Endothelial cell of umbilical vein (primary cell): ENCODE measurements at regions of chr13 and their contacts with region 1.

Region 1: DNA sequence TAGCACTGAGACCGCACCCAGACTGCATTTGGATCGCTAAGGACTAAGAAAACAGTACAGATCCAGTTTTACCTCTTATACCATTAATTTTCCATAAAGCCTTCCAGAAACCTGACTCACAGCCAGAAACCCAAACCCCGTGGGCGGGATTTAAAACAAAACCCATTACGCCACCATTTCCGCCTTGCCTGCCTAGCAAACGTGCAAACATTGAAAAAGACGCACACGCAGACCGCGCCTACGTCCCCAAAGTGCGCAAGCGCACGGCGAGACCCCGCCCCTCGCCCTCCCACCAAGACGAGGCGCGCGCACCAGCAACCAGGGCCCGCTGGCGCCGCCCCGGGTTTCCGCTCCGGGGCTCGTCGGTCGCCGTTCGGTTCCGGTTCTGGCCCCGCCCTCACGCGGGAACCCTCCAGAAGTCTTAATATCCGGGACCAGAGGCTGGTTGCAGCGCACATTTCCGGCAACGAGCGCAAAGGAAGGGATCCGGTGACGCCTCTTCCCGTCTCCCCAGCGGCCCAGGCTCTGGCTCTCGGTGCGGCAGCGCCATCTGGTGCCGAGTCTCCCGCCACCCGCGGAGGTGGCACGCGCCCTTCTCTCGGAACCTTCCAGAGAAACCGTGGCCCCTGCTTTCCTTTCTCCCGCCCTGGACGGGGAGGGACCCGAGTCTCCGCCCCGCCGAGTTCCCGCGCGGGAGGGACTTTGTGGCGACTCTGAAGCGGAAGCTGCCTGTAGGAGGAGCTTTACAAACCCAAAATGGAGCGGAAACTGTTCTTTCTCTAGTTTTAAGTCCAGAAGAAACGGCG is 256.9 kb upstream of the STARD13 start:
- DNase-seq: peak; percentile 100
- H3K4me3 ChIP-seq: peak overlapping the region; percentile 24 to 67 (median 37)
- H3K27ac ChIP-seq: peak overlapping the region; percentile 100
- H3K4me1 ChIP-seq: peaks cover 23% of the 10 kb centered on the region
- H3K27me3 ChIP-seq: no peaks in the 10 kb centered on the region
- CTCF ChIP-seq: peak; percentile 94 to 98
- POLR2A ChIP-seq: peak; percentile 64

Region 2: GRCh38 chr13:33069365-33069764 is 473.1 kb before region 1 on chr13:
- CTCF ChIA-PET with region 1: no interaction called
- POLR2A ChIA-PET with region 1: no interaction called
- dilution Hi-C with region 1: no loop called
- intact Hi-C with region 1: loop called (anchors 5 kb)
- DNase-seq: peak; percentile 25
- H3K4me3 ChIP-seq: no peak overlapping the region
- H3K27ac ChIP-seq: no peak overlapping the region
- H3K4me1 ChIP-seq: no peaks in the 10 kb centered on the region
- H3K27me3 ChIP-seq: no peaks in the 10 kb centered on the region
- CTCF ChIP-seq: peak; percentile 2 to 10
- POLR2A ChIP-seq: no peak

Region 3: GRCh38 chr13:33188093-33188882 is 354.2 kb before region 1 on chr13:
- CTCF ChIA-PET with region 1: interaction called, 5 read pairs
- POLR2A ChIA-PET with region 1: no interaction called
- dilution Hi-C with region 1: no loop called
- intact Hi-C with region 1: loop called (anchors 1 kb)
- DNase-seq: peak; percentile 45
- H3K4me3 ChIP-seq: no peak overlapping the region
- H3K27ac ChIP-seq: peak overlapping the region; percentile 84
- H3K4me1 ChIP-seq: peaks cover 50% of the 10 kb centered on the region
- H3K27me3 ChIP-seq: no peaks in the 10 kb centered on the region
- CTCF ChIP-seq: no peak
- POLR2A ChIP-seq: no peak

Region 4: GRCh38 chr13:33251131-33251661 is 291.3 kb before region 1 on chr13:
- CTCF ChIA-PET with region 1: interaction called, 5 read pairs
- POLR2A ChIA-PET with region 1: no interaction called
- dilution Hi-C with region 1: no loop called
- intact Hi-C with region 1: loop called (anchors 1 kb)
- DNase-seq: peak; percentile 87
- H3K4me3 ChIP-seq: peak overlapping the region in 1 of 3 experiments; percentile 3
- H3K27ac ChIP-seq: peak overlapping the region; percentile 85
- H3K4me1 ChIP-seq: peaks cover 44% of the 10 kb centered on the region
- H3K27me3 ChIP-seq: no peaks in the 10 kb centered on the region
- CTCF ChIP-seq: no peak
- POLR2A ChIP-seq: no peak

Region 5: DNA sequence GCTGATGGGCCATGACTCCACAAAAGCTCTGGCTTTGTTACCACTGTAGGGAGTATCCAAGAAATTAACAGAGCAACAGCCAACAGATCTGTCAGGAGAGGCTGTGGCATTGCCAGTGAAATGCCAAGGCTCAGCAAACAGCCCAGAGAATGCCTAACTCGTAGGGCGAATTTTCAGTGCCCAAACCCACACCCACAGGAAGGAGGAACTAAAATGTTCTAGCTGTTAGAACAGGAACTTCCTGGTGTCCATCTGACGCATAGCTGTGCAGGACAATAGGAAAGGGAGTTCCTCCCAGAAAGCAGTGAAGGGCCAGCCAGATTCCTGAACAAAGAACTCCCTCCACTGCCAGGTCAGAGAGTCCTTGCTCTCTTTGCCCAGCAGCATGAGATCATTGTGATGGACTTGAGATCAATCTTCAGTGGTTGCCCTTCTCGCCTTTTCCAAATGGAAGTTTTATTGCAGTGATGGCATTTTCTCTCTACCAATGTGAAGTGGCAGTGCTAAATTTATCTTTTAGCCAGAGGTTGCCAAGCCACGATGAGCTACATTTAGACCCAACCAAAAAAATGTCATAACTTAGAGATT is 32.8 kb before region 1 on chr13:
- CTCF ChIA-PET with region 1: interaction called, 4 read pairs
- POLR2A ChIA-PET with region 1: no interaction called
- dilution Hi-C with region 1: no loop called
- intact Hi-C with region 1: loop called (anchors 1 kb)
- DNase-seq: peak; percentile 67
- H3K4me3 ChIP-seq: no peak overlapping the region
- H3K27ac ChIP-seq: peak overlapping the region; percentile 88
- H3K4me1 ChIP-seq: peaks cover 22% of the 10 kb centered on the region
- H3K27me3 ChIP-seq: no peaks in the 10 kb centered on the region
- CTCF ChIP-seq: no peak
- POLR2A ChIP-seq: peak; percentile 36

Region 6: GRCh38 chr13:35164324-35164932 is 1621.9 kb after region 1 on chr13:
- CTCF ChIA-PET with region 1: interaction called, 16 read pairs
- POLR2A ChIA-PET with region 1: no interaction called
- dilution Hi-C with region 1: no loop called
- intact Hi-C with region 1: no loop called
- DNase-seq: peak; percentile 59
- H3K4me3 ChIP-seq: no peak overlapping the region
- H3K27ac ChIP-seq: no peak overlapping the region
- H3K4me1 ChIP-seq: no peaks in the 10 kb centered on the region
- H3K27me3 ChIP-seq: no peaks in the 10 kb centered on the region
- CTCF ChIP-seq: peak; percentile 25 to 26
- POLR2A ChIP-seq: no peak